Posterior vena cava (tissue), 2 donors: ENCODE measurements at regions of chr10 and their contacts with region 1.

Region 1: DNA sequence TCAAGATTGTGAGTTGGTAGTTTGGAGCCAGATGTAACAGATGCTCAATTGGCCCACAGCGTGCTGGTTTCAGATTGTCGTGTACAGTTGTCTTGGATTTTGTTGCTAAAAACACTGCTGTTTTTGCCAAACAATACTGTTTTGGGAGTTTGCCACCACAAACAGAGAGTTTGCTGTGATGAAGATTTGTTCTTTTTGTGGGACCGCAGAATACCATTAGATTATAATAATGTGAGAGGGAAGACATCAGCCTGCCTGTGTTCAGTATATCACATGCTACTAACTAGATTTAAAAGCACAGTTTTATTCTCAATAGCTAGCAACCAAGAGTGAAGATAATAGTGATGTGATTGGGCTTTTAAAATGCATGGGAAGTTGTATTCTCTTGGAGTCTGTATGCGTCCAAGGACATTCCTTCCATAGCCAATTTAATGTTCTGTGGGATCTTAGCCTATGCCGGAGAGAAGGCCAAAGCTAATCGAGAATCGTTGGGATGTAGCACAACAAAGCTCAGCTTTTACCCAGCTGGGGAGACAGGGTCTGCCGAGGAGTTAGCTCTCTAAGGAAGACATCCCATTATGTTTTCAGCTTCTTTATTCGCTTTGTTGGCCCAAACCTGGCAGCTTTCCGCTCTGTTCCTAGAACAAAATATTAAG is 18.7 kb upstream of the ITGA8 start:
- DNase-seq: no peak

Region 2: GRCh38 chr10:15068802-15069201 is 669.6 kb before region 1 on chr10:
- intact Hi-C with region 1: no loop called
- DNase-seq: no peak

Region 3: GRCh38 chr10:15642095-15642494 is 96.3 kb before region 1 on chr10:
- intact Hi-C with region 1: no loop called
- DNase-seq: no peak

Region 4: GRCh38 chr10:15780353-15781135 is 42.1 kb after region 1 on chr10:
- intact Hi-C with region 1: loop called in 1 of 2 experiments (anchors 5 kb)
- DNase-seq: peak; percentile 83